Common myeloid progenitor, CD34-positive (primary cell): ENCODE measurements at regions of chr16 and their contacts with region 1.

Region 1: DNA sequence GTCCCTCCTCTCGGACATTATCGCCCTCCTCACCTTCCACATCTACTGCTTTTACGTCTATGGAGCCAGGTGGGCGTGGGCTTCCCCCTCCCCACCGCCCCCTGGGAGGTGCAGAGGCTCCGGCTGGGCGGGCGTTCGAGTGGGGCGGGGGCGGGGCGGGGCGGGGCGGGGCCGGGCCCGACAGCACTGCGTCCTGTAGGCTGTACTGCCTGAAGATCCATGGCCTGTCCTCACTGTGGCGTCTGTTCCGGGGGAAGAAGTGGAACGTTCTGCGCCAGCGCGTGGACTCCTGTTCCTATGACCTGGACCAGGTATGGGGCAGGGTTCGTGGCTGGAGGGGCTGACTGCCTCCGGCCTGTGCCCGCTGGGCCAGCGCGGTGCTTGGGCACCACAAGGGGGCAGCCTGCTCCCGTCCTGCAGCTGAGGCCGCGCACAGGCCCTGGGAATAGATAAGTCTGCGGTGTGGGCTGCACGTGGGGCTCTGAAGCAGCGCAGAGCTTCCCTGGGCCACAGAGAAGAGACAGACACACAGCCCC is 9.2 kb downstream of the PIGQ start:
- DNase-seq: peak; percentile 87 to 93 (median 93)
- H3K4me3 ChIP-seq: peak overlapping the region in 2 of 7 experiments; percentile 55 to 73
- H3K27ac ChIP-seq: no peak overlapping the region
- H3K4me1 ChIP-seq: peaks cover 0 to 12% (median 5%) of the 10 kb centered on the region in 4 experiments
- H3K27me3 ChIP-seq: no peaks in the 10 kb centered on the region

Region 2: GRCh38 chr16:589658-590159 is 10.8 kb after region 1 on chr16 and contains the start of gene RAB40C:
- CTCF ChIA-PET with region 1: interaction called, 21 read pairs
- POLR2A ChIA-PET with region 1: interaction called, 4 read pairs
- DNase-seq: peak; percentile 98 to 99 (median 99)
- H3K4me3 ChIP-seq: peak within 1 kb of the TSS; percentile 75 to 96 (median 87)
- H3K27ac ChIP-seq: peak within 1 kb of the TSS; percentile 90 to 96
- H3K4me1 ChIP-seq: peaks cover 0 to 57% (median 54%) of the 10 kb centered on the region in 4 experiments
- H3K27me3 ChIP-seq: peaks cover 0 to 2% (median 0%) of the 10 kb centered on the region in 5 experiments

Region 3: DNA sequence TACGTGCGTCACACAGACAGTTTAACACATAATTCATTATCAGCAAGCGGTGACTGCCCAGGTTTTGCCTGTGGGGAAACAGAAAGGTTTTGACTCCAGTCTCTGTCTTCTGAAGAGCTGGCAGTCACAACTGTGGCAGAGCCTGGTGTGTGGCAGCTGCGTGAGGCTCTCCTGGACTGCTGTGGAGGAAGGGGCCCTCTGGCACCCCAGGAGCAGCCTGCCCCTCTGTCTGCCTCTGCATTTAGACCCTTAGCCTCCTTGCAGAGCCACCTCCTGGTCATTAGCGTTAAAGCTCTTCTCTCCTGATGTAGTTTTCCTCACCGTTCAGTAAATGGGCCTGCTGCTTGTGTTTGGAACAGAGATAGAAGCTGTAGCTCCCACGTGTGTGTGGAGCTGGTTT is 21.8 kb after region 1 on chr16:
- CTCF ChIA-PET with region 1: interaction called, 20 read pairs
- POLR2A ChIA-PET with region 1: no interaction called
- DNase-seq: peak; percentile 60 to 73 (median 71)
- H3K4me3 ChIP-seq: no peak overlapping the region
- H3K27ac ChIP-seq: no peak overlapping the region
- H3K4me1 ChIP-seq: peaks cover 0 to 9% (median 7%) of the 10 kb centered on the region in 4 experiments
- H3K27me3 ChIP-seq: no peaks in the 10 kb centered on the region